Posterior vena cava (tissue), 2 donors: ENCODE measurements at regions of chr1 and their contacts with region 1.

Region 1: DNA sequence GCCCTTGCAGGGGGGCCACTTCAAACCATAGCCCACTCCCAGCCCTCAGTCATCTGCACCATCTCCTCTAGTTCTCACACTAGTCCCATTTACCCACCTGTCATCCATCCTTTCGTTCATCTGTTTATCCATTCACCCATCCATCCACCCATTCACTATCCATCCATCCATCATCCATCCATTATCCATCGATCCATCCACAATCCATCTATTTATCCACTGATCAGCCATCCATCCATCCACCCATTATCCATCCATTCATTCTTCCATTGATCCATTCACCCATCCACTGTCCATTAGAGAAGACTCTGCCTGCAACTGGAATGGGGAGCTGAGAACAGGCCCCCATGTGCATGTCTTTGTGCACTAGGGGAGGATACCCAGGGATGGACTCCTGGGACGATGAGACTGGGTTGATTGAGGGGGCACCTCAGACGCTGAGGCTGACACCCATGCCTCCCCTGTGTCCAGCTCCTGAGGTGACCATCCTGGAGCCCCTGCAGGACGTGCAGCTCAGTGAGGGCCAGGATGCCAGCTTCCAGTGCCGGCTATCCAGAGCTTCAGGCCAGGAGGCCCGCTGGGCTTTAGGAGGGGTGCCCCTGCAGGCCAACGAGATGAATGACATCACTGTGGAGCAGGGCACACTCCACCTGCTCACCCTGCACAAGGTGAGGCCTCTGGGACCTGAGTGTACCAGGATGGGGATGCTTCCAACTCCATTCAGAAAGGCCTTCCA is 97.8 kb downstream of the TRIM11 start:
- DNase-seq: no peak

Region 2: DNA sequence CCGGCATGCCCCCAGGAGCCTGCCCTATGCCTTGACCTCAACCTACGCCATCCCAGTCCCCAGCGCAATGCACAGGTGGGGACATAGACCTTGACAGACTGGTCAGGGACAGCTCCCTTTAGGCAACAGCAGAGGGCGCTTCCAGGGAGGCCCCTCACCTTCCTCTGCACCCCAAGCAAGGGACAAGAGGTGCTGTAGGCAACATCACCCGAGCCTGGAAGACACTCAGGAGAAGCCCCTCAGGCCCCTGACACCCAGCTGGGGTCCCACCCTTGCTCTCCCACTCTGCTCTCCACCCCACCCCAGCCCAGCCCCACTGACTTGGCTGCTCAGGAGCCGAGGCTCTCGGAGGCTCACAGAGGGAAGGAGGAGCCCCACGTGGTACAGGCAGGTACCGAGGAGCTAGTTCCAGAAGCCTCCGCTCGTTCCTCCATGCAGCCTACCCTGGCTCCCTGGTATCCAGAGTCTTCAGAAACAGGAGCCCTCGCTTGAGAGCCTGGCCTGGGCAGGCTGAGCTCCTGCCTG is 304.4 kb before region 1 on chr1:
- intact Hi-C with region 1: no loop called
- DNase-seq: peak; percentile 66

Region 3: DNA sequence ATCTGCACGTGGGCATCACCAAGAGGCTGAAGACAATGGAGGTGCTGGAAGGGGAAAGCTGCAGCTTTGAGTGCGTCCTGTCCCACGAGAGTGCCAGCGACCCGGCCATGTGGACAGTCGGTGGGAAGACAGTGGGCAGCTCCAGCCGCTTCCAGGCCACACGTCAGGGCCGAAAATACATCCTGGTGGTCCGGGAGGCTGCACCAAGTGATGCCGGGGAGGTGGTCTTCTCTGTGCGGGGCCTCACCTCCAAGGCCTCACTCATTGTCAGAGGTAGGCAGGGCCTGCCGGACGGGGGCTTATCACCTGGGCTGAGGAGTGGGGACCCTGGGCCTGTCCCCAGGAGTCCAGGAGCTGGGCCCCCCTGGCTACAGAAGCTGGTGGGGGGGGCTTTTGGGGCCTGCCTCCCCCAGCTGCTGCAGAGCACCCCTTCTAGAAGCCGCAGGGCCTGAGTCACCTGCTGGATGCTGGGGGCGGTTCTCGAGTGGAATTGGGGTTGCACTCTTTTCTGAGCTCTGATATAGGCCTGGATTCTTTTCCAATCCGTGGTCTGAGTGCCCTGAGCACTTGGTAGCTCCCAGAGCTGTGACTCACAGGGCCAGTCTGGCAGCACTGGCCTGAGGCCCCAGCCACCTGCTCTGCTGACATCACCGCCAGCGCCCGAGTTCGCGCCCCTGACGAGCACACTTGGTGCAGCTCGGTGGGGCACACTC is 26.7 kb before region 1 on chr1:
- intact Hi-C with region 1: loop called in 1 of 2 experiments (anchors 2 kb)
- DNase-seq: peak; percentile 78